Activated CD4-positive, alpha-beta T cell treated with anti-CD3 and anti-CD28 coated beads for 36 hours (primary cell): ENCODE measurements at regions of chr3 and their contacts with region 1.

Region 1: DNA sequence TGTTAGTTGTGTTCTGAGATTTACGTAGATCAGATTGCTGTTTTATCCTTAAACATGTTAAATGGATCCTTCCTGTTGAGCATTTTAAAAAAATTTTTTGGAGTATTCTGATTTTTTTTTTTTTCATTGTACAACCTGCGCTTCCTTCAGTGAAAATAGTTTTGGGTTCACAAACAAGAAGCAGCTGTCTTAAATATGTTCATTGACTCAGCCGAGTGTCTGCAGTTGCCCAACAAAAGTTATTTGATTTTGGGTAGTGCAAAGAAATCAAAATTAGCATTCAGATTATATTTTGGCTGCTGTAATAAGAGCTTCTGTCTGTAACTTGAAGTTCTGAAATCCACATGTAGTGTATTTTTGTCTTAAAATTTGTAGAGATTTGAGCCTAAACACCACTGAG is 148.2 kb downstream of the BBX start:
- DNase-seq: no peak
- ATAC-seq: no peak
- H3K4me3 Mint-ChIP-seq: no peak overlapping the region
- H3K27ac Mint-ChIP-seq: no peak overlapping the region
- H3K4me1 Mint-ChIP-seq: peaks cover 29% of the 10 kb centered on the region
- H3K27me3 Mint-ChIP-seq: no peaks in the 10 kb centered on the region

Region 2: GRCh38 chr3:107660306-107660976 is 10.5 kb before region 1 on chr3:
- CTCF ChIA-PET with region 1: interaction called, 46 read pairs
- POLR2A ChIA-PET with region 1: no interaction called
- intact Hi-C with region 1: no loop called
- DNase-seq: no peak
- ATAC-seq: no peak
- H3K4me3 Mint-ChIP-seq: no peak overlapping the region
- H3K27ac Mint-ChIP-seq: no peak overlapping the region
- H3K4me1 Mint-ChIP-seq: peaks cover 26% of the 10 kb centered on the region
- H3K27me3 Mint-ChIP-seq: no peaks in the 10 kb centered on the region